PC-9 (cell line): ENCODE measurements at regions of chr10 and their contacts with region 1.

Region 1: GRCh38 chr10:45425621-45426563 is 51.9 kb downstream of the ALOX5 start:
- DNase-seq: peak; percentile 75
- H3K4me3 ChIP-seq: no peak overlapping the region
- H3K27ac ChIP-seq: 0 out of 2 replicates have a peak overlapping the region, but pooled peaks have one; percentile 11
- H3K4me1 ChIP-seq: peaks cover 12% of the 10 kb centered on the region
- H3K27me3 ChIP-seq: no peaks in the 10 kb centered on the region
- CTCF ChIP-seq: no peak

Region 2: DNA sequence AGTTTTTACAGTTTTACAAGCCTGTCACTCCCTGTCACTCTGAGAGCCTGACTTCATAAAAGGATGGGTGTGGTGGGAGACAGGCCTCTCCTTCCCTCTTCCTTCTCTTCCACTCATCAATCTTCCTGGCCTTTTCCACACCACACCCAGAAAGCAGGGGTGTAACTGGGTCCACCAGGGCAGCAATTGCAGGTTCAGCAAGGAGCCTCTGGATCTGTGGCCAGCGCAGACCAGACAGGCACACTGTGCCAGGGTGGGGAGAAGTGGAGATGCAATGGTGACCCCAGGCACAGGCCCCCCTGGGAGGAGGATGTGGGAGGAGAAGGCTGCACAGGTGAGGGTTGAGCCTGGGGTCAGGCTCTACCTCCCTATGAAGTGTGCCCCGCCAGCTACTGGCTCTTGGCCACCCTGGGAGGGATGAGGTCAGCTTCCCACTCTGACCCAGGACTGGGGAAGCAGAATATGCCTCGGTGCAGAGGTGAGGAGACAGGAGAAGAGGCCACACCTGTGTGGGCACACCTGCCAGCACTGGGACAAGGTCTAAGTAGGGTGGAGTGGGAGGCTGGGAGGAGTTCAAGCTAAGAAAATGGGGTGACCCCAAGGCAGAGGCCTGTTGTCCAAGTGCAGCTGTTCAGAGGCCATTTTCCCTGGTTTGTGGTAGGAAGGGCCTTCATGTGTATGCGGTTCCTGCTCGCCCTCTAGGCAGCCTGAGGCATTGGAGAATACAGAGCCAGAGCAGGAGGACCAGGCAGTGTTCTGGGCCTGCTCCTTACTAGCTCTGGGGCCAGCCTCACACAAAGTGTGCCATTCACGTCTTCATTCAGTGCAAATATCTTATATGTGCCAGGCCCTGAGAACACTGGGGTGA is 535.0 kb before region 1 on chr10:
- CTCF ChIA-PET with region 1: no interaction called
- POLR2A ChIA-PET with region 1: no interaction called
- intact Hi-C with region 1: no loop called
- DNase-seq: peak in 1 of 2 experiments; percentile 3
- H3K4me3 ChIP-seq: no peak overlapping the region
- H3K27ac ChIP-seq: no peak overlapping the region
- H3K4me1 ChIP-seq: no peaks in the 10 kb centered on the region
- H3K27me3 ChIP-seq: peaks cover 10% of the 10 kb centered on the region
- CTCF ChIP-seq: no peak

Region 3: DNA sequence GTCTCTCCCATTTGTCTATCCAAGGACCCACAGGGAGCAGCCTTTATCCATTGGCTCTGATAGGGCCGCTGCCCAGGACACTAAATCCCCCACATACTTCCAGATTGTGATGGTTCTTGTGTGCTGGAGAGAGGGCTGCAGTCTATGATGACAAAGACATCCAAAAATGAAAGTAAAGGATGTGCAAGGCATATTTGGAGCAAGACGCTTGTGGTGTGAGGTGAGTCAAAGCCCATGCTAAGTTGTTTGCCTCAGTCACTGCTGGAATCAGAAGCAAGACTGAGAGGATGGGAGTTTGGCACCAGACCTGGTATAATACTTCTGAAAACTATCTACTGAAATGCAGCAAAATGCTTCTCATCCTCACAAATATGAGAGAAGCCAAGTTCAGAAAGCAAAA is 402.5 kb before region 1 on chr10:
- CTCF ChIA-PET with region 1: no interaction called
- POLR2A ChIA-PET with region 1: no interaction called
- intact Hi-C with region 1: no loop called
- DNase-seq: no peak
- H3K4me3 ChIP-seq: no peak overlapping the region
- H3K27ac ChIP-seq: no peak overlapping the region
- H3K4me1 ChIP-seq: no peaks in the 10 kb centered on the region
- H3K27me3 ChIP-seq: 0 out of 2 replicates have a peak, but pooled peaks cover 6% of the 10 kb centered on the region
- CTCF ChIP-seq: no peak

Region 4: DNA sequence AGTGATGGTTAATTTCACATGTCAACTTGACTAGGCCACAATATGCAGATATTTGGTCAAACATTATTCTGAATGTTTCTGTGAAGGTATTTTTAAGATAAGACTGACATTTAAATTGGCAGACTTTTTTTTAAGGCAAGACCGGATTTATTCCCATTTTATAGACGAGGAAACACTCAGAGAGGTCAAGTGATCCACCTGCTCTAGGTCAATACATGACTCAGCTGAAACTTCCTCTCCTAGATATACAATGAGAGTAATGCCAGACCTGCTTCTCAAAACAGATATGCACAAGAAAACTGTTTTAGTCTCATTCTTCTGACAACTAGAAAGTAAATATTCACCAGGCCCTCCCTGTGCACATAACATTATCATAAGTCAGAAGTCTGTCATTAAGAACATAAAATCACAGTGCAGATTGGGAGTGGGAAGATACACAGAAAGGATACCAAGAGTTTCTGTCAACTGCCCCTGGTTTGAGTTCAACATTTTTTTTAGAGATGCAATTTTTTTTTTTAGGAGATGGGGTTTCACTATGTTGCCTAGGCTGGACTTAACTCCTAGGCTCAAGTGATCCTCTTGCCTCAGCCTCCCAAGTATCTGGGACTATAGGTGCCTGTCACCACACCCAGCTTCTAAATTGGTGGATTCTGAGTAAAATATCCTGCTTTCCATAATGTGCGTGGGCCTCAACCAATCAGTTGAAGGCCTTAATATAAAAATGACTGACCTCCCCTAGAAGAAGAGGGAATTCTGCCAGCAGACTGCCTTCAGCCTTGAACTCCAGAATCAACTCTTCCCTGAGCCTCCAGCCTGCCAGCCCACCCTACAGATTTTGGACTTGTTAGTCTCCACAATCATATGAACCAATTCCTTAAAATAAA is 125.3 kb after region 1 on chr10:
- CTCF ChIA-PET with region 1: no interaction called
- POLR2A ChIA-PET with region 1: no interaction called
- intact Hi-C with region 1: no loop called
- DNase-seq: no peak
- H3K4me3 ChIP-seq: no peak overlapping the region
- H3K27ac ChIP-seq: 0 out of 2 replicates have a peak overlapping the region, but pooled peaks have one; percentile 17
- H3K4me1 ChIP-seq: no peaks in the 10 kb centered on the region
- H3K27me3 ChIP-seq: no peaks in the 10 kb centered on the region
- CTCF ChIP-seq: no peak

Region 5: GRCh38 chr10:45594276-45595106 is 168.6 kb after region 1 on chr10:
- CTCF ChIA-PET with region 1: no interaction called
- POLR2A ChIA-PET with region 1: interaction called, 12 read pairs
- intact Hi-C with region 1: no loop called
- DNase-seq: peak; percentile 85 to 94
- H3K4me3 ChIP-seq: peak overlapping the region; percentile 63
- H3K27ac ChIP-seq: no peak overlapping the region
- H3K4me1 ChIP-seq: peaks cover 16% of the 10 kb centered on the region
- H3K27me3 ChIP-seq: no peaks in the 10 kb centered on the region
- CTCF ChIP-seq: no peak